Activated CD4-positive, alpha-beta T cell treated with anti-CD3 and anti-CD28 coated beads for 36 hours (primary cell): ENCODE measurements at regions of chr21 and their contacts with region 1.

Region 1: GRCh38 chr21:38244885-38245545 is 11.8 kb upstream of the KCNJ15 start:
- DNase-seq: peak; percentile 84
- ATAC-seq: peak; percentile 94
- H3K4me3 Mint-ChIP-seq: peak overlapping the region; percentile 48
- H3K27ac Mint-ChIP-seq: peak overlapping the region; percentile 86
- H3K4me1 Mint-ChIP-seq: peaks cover 38% of the 10 kb centered on the region
- H3K27me3 Mint-ChIP-seq: peaks cover 15% of the 10 kb centered on the region

Region 2: GRCh38 chr21:38188037-38188436 is 57.0 kb before region 1 on chr21:
- CTCF ChIA-PET with region 1: no interaction called
- POLR2A ChIA-PET with region 1: no interaction called
- intact Hi-C with region 1: no loop called
- DNase-seq: no peak
- ATAC-seq: no peak
- H3K4me3 Mint-ChIP-seq: no peak overlapping the region
- H3K27ac Mint-ChIP-seq: no peak overlapping the region
- H3K4me1 Mint-ChIP-seq: no peaks in the 10 kb centered on the region
- H3K27me3 Mint-ChIP-seq: peaks cover 7% of the 10 kb centered on the region

Region 3: DNA sequence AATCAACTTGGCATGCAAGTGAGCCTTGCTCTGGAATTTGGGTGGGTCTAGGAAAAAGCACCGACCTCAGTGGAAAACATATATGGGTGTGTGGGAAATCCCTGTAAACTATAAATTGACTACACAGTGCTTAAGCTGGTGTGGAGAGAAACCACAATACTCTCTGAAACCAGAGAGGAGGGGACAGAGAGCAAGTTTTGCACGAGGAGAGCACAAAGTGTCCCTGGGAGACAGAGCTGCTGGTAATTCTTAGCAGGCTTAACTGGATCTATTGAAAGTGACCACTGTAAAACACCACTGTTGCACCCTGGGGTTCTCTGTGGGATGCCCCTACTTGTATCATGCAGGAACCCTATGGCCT is 24.5 kb after region 1 on chr21:
- CTCF ChIA-PET with region 1: interaction called, 3 read pairs
- POLR2A ChIA-PET with region 1: no interaction called
- intact Hi-C with region 1: loop called (anchors 1 to 2 kb)
- DNase-seq: no peak
- ATAC-seq: peak; percentile 64
- H3K4me3 Mint-ChIP-seq: no peak overlapping the region
- H3K27ac Mint-ChIP-seq: no peak overlapping the region
- H3K4me1 Mint-ChIP-seq: peaks cover 34% of the 10 kb centered on the region
- H3K27me3 Mint-ChIP-seq: no peaks in the 10 kb centered on the region

Region 4: DNA sequence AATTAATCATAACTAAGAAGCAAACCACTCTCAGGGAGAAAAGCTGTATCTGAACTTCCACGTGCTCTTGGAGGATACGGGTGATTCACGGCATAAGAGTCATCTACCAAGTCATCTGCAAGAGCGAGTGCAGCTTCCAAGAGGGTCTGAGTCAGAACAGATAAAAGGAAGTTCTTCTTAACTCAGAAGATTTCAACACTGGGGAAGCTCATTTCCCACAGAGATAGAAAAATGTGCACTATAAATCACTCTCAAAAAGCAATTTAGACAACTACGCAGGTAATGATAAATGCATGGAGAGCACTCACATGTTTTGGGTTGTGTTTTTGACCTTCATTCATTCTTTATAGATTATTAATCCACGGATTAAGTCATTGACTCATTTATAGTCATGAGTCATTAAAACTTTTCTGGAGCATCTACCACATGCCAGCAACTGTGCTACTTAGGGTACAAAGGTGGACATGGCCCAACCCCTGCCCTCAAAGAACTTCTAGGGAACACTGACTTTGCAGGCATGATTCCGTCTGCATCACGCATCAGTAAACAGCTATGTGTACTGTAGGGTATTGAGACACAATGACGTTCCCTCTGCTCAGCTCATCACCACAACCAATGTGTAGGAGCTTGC is 32.6 kb after region 1 on chr21:
- CTCF ChIA-PET with region 1: no interaction called
- POLR2A ChIA-PET with region 1: no interaction called
- intact Hi-C with region 1: loop called (anchors 1 to 2 kb)
- DNase-seq: peak; percentile 42
- ATAC-seq: peak; percentile 98
- H3K4me3 Mint-ChIP-seq: no peak overlapping the region
- H3K27ac Mint-ChIP-seq: no peak overlapping the region
- H3K4me1 Mint-ChIP-seq: peaks cover 12% of the 10 kb centered on the region
- H3K27me3 Mint-ChIP-seq: peaks cover 4% of the 10 kb centered on the region

Region 5: GRCh38 chr21:38303300-38303699 is 58.3 kb after region 1 on chr21:
- CTCF ChIA-PET with region 1: no interaction called
- POLR2A ChIA-PET with region 1: interaction called, 5 read pairs
- intact Hi-C with region 1: loop called in 1 of 2 experiments (anchors 5 kb)
- DNase-seq: no peak
- ATAC-seq: no peak
- H3K4me3 Mint-ChIP-seq: no peak overlapping the region
- H3K27ac Mint-ChIP-seq: no peak overlapping the region
- H3K4me1 Mint-ChIP-seq: peaks cover 45% of the 10 kb centered on the region
- H3K27me3 Mint-ChIP-seq: peaks cover 3% of the 10 kb centered on the region

Region 6: DNA sequence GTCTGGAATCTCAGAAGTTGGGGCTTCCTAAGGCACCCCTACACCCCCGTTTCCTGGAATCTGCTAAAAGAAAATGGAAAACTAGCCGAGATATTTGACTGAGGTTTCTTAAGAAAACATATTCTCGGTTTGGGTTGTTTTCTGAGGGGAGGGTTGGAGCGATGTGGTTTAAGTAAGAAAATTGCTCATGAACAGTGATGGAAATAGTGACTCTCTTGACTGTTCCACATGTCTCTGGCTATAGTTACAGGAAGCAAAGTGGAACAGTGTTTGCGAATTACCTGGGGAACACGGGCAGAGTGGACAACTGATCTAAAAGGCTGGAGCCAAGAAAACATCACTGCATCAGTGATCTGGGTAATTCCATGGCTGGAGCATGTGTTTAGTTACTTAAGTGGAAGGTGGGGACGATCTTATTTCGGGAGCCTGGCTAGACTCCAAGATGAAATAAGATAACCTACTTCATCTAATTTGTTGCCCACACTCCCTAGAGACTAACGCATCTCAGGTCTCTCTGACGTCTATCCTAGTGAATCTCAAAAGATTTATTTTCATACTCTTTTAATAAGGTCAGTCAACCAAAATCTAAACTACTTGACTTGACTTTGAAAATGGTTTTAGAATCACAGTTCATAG is 104.2 kb after region 1 on chr21:
- CTCF ChIA-PET with region 1: interaction called, 7 read pairs
- POLR2A ChIA-PET with region 1: interaction called, 4 read pairs
- intact Hi-C with region 1: loop called (anchors 1 kb)
- DNase-seq: peak; percentile 41
- ATAC-seq: peak; percentile 78
- H3K4me3 Mint-ChIP-seq: no peak overlapping the region
- H3K27ac Mint-ChIP-seq: peak overlapping the region; percentile 78
- H3K4me1 Mint-ChIP-seq: peaks cover 41% of the 10 kb centered on the region
- H3K27me3 Mint-ChIP-seq: peaks cover 6% of the 10 kb centered on the region